Colonic mucosa (tissue), 4 donors: ENCODE measurements at regions of chr22 and their contacts with region 1.

Region 1: DNA sequence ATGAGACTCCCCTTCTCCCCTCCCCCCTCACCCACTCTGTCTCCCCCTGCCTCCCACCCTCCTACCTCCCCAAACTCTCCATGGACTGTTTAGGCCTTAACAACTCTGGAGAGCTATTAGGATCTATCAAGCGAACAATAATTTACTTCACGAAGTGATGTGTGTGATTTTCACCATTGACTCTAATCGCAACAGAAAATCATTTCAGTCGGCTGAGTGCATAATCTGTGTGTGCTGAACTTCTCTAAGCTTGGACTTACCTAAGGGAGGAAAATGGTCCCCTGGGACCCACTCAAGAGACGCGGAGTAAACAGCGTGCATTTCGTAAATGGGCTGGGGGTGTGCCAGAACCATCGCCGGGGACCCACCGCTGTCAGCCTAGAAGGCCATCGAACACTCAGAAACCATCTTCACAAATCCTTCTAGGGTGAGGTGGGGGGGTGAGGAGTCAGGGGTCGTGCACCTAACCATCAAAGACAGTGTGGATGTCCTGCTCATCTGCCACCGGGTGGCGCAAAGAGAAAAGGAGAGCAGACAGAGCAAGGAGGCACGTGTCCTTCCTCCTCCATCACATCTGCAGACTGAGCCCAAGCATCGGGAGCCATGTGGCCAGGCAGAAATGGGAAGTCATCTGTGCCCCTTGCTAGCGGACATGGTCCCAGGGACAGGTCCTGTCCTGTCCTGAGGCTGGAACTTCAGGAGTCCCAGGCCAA is 62.1 kb upstream of the NUP50 start:
- DNase-seq: peak; percentile 57
- H3K4me3 ChIP-seq: no peak overlapping the region
- H3K27ac ChIP-seq: no peak overlapping the region
- H3K4me1 ChIP-seq: no peaks in the 10 kb centered on the region
- H3K27me3 ChIP-seq: no peaks in the 10 kb centered on the region
- CTCF ChIP-seq: peak; percentile 39

Region 2: DNA sequence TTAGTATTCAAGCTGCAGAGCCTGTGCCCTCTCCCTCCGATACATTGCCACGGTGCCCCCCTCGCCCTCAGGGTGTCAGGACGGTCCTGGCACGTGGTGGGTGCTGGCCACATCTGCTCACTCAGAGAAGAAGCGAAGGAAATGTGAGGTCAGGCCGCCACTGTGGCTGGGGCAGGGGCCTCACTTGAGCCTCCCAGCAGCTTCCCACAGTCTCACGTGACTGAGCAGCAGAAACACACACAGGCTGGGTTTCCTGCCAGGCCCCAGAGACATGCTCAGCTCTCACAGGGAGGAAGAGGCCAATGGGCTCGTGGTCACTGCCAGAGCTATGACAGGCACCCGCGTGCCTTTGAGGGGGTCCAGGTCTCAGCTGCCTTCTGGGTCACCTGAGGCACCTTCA is 437.5 kb before region 1 on chr22:
- intact Hi-C with region 1: no loop called
- DNase-seq: peak; percentile 62
- H3K4me3 ChIP-seq: no peak overlapping the region
- H3K27ac ChIP-seq: no peak overlapping the region
- H3K4me1 ChIP-seq: no peaks in the 10 kb centered on the region
- H3K27me3 ChIP-seq: peaks cover 13% of the 10 kb centered on the region
- CTCF ChIP-seq: no peak

Region 3: DNA sequence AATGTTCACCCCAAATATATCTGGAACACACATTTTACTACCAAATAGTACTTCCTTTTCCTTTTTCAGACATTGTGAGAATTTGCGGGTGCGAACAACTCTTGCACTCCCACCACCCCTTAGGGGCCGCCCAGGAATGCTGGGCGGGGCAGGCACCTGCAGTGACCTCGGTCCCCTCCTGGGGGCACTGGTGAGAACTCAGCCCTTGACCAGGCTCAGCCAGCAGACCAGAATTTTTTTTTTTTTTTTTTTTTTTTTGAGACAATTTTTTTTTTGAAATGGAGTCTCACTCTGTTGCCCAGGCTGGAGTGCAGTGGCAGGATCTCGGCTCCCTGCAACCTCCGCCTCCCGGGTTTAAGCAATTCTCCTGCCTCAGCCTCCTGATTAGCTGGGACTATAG is 273.5 kb before region 1 on chr22:
- intact Hi-C with region 1: loop called (anchors 10 kb)
- DNase-seq: no peak
- H3K4me3 ChIP-seq: no peak overlapping the region
- H3K27ac ChIP-seq: no peak overlapping the region
- H3K4me1 ChIP-seq: no peaks in the 10 kb centered on the region
- H3K27me3 ChIP-seq: no peaks in the 10 kb centered on the region
- CTCF ChIP-seq: peak; percentile 37

Region 4: GRCh38 chr22:45263463-45264269 is 162.0 kb after region 1 on chr22:
- intact Hi-C with region 1: loop called (anchors 5 kb)
- DNase-seq: peak; percentile 63
- H3K4me3 ChIP-seq: no peak overlapping the region
- H3K27ac ChIP-seq: no peak overlapping the region
- H3K4me1 ChIP-seq: no peaks in the 10 kb centered on the region
- H3K27me3 ChIP-seq: no peaks in the 10 kb centered on the region
- CTCF ChIP-seq: peak; percentile 44

Region 5: DNA sequence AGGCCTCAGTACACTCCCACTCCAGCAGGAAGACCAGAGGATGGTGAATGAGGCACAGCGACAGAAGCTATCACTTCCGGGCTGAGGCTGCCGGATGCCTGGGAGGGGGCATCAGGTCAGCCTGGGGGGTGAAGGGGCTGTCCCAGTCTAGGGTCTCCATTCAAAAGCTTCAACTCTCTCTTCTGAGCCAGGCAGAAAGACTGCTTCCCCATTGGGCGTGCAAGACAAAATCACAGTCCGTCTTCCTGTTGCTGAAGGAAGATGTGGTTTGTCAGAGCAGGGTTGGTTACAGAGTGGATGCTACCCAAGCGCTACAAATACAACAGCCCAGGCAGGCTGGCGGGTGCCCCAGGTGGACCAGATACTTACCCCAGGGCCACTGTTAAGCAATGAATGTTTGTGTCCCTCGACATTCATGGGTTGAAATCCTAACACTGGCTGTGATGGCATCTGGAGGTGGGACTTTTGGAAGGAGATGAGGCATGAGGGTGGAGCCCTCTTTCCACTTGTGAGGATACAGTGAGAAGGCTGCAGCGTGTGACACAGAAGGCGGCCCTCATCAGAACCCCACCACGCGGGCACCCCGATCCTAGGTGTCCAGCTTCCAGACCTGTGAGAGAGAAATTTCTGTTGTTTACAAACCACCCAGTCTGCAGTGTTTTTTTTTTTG is 195.1 kb after region 1 on chr22:
- intact Hi-C with region 1: no loop called
- DNase-seq: no peak
- H3K4me3 ChIP-seq: no peak overlapping the region
- H3K27ac ChIP-seq: no peak overlapping the region
- H3K4me1 ChIP-seq: no peaks in the 10 kb centered on the region
- H3K27me3 ChIP-seq: no peaks in the 10 kb centered on the region
- CTCF ChIP-seq: no peak